Activated T-helper 1 cell treated with anti-CD3 and anti-CD28 coated beads, Interleukin-12 subunit alpha, Interleukin-12 subunit beta, Interleukin-2, Interleukin-4 antibody, amounts not matched to agents 30 ng/mL and 10 ng/mL and 1 ng/mL, durations not matched to agents 14 hours and 24 hours and 36 hours (primary cell): ENCODE measurements at regions of chr9 and their contacts with region 1.

Region 1: GRCh38 chr9:20209391-20210340 is 412.6 kb downstream of the MLLT3 start:
- DNase-seq: peak; percentile 62
- H3K4me3 Mint-ChIP-seq: peak overlapping the region; percentile 25
- H3K27ac Mint-ChIP-seq: peak overlapping the region; percentile 89
- H3K4me1 Mint-ChIP-seq: peaks cover 39% of the 10 kb centered on the region
- H3K27me3 Mint-ChIP-seq: no peaks in the 10 kb centered on the region

Region 2: DNA sequence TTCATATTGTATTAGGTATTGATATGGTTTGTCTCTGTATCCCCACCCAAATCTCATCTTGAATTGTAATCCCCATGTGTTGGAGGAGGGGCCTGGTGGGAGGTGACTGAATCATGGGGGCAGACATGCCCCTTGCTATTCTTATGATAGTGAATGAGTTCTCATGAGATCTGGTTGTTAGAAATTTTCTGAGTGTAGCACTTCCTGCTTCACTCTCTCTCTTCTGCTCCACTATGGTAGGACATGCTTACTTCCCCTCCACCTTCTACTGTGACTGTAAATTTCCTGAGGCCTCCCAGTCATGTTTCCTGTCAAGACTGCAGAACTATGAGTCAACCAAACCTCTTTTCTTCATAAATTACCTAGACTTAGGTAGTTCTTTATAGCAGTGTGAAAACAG is 233.4 kb before region 1 on chr9:
- intact Hi-C with region 1: loop called (anchors 1 kb)
- DNase-seq: peak; percentile 47
- H3K4me3 Mint-ChIP-seq: peak overlapping the region; percentile 1
- H3K27ac Mint-ChIP-seq: peak overlapping the region; percentile 92
- H3K4me1 Mint-ChIP-seq: peaks cover 51% of the 10 kb centered on the region
- H3K27me3 Mint-ChIP-seq: no peaks in the 10 kb centered on the region

Region 3: GRCh38 chr9:20242510-20243189 is 33.0 kb after region 1 on chr9:
- intact Hi-C with region 1: loop called (anchors 1 kb)
- DNase-seq: peak; percentile 36
- H3K4me3 Mint-ChIP-seq: peak overlapping the region; percentile 36
- H3K27ac Mint-ChIP-seq: peak overlapping the region; percentile 27
- H3K4me1 Mint-ChIP-seq: peaks cover 65% of the 10 kb centered on the region
- H3K27me3 Mint-ChIP-seq: peaks cover 2% of the 10 kb centered on the region

Region 4: DNA sequence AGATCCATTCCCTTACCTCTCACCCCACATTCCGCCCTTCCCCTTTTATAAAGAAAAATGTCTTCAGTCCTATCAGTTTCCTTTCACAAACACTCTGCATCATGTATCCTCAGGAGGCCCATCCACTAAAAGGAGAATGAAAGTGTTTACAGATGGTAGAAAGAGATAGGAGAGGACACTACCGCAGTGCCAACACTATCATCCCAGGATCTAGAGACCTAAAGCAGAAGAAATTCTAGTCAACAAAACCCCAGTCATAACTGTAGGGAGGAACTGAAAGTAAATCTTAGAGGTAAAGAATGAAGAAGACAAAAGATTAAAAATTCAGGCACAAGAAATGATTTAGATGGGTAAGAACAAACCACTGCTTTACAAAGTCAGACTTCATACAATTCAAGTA is 298.6 kb after region 1 on chr9:
- intact Hi-C with region 1: loop called (anchors 1 kb)
- DNase-seq: peak; percentile 30
- H3K4me3 Mint-ChIP-seq: peak overlapping the region; percentile 13
- H3K27ac Mint-ChIP-seq: peak overlapping the region; percentile 5
- H3K4me1 Mint-ChIP-seq: peaks cover 77% of the 10 kb centered on the region
- H3K27me3 Mint-ChIP-seq: no peaks in the 10 kb centered on the region

Region 5: DNA sequence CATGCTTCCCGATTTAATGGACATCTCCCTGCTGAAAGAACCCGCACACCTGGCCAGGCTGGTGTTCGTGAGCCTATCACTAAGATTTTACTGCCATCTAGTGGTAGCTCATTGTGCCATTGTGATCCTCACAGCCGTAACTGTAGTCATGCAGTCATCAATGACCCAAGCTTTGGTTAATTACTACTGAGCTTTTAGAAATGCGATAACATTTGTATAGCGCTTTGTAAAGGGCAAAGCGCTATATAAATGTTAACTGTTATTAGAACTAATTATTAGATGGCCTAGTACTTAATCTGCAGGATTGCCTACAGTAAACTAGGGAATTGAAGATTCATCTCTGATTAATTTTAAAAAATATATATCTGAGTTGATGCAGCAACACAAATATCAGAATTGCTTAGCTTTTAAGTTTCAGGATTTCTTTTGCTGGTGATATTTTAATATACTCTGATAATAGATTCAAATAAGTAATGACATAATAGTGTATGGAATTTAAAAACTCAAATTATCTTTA is 731.6 kb after region 1 on chr9:
- intact Hi-C with region 1: loop called (anchors 5 kb)
- DNase-seq: peak; percentile 28
- H3K4me3 Mint-ChIP-seq: no peak overlapping the region
- H3K27ac Mint-ChIP-seq: no peak overlapping the region
- H3K4me1 Mint-ChIP-seq: peaks cover 7% of the 10 kb centered on the region
- H3K27me3 Mint-ChIP-seq: no peaks in the 10 kb centered on the region

Region 6: GRCh38 chr9:22079873-22080341 is 1870.2 kb after region 1 on chr9:
- intact Hi-C with region 1: loop called (anchors 2 kb)
- DNase-seq: peak; percentile 72
- H3K4me3 Mint-ChIP-seq: peak overlapping the region; percentile 56
- H3K27ac Mint-ChIP-seq: peak overlapping the region; percentile 78
- H3K4me1 Mint-ChIP-seq: peaks cover 54% of the 10 kb centered on the region
- H3K27me3 Mint-ChIP-seq: peaks cover 17% of the 10 kb centered on the region